Dorsolateral prefrontal cortex (tissue), 120 donors: ENCODE measurements at regions of chr19 and their contacts with region 1.

Region 1: GRCh38 chr19:4328243-4328990 is 10.2 kb downstream of the STAP2 start:
- DNase-seq: peak; percentile 88 to 99 (median 96)
- H3K4me3 ChIP-seq: peak overlapping the region; percentile 8 to 79 (median 63)
- H3K27ac ChIP-seq: peak overlapping the region in 32 of 59 donors; percentile 4 to 80 (median 38)
- H3K27me3 ChIP-seq: no peaks in the 10 kb centered on the region
- CTCF ChIP-seq: peak in 1 of 56 donors; percentile 7

Region 2: GRCh38 chr19:4342615-4343369 is 14.4 kb after region 1 on chr19:
- intact Hi-C with region 1: loop called (anchors 1 to 2 kb)
- DNase-seq: peak; percentile 85 to 99 (median 97)
- H3K4me3 ChIP-seq: peak overlapping the region; percentile 58 to 90 (median 81)
- H3K27ac ChIP-seq: peak overlapping the region; percentile 76 to 99 (median 96)
- H3K27me3 ChIP-seq: no peaks in the 10 kb centered on the region
- CTCF ChIP-seq: peak in 21 of 56 donors; percentile 6 to 33 (median 17)

Region 3: GRCh38 chr19:4425537-4425936 is 97.1 kb after region 1 on chr19:
- intact Hi-C with region 1: no loop called
- DNase-seq: no peak
- H3K4me3 ChIP-seq: no peak overlapping the region
- H3K27ac ChIP-seq: no peak overlapping the region
- H3K27me3 ChIP-seq: no peaks in the 10 kb centered on the region
- CTCF ChIP-seq: no peak